GM18951 (cell line): ENCODE measurements at regions of chr1 and their contacts with region 1.

Region 1: DNA sequence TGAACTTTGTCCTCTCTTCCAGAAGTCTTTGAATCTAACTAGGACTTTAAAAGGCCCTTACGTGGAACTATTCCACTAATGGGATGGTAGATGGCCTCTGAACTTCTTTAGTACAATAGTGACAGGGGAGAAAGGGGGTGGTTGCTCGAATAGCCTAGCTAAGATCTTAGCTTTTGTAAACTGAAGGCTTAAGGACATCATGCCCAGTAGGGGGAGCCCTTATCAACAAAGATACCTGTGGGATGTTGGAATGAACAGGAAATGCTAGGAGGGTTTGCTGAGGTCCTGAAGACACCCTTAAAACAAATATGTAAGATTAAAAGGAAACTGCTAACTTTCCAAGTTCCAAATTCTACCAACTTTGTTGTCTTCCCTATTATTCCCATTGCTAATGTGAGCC is 33.2 kb downstream of the NHLH2 start:
- POLR2A ChIP-seq: no peak

Region 2: GRCh38 chr1:115911324-115911723 is 103.6 kb after region 1 on chr1:
- in situ Hi-C with region 1: no loop called
- POLR2A ChIP-seq: no peak

Region 3: DNA sequence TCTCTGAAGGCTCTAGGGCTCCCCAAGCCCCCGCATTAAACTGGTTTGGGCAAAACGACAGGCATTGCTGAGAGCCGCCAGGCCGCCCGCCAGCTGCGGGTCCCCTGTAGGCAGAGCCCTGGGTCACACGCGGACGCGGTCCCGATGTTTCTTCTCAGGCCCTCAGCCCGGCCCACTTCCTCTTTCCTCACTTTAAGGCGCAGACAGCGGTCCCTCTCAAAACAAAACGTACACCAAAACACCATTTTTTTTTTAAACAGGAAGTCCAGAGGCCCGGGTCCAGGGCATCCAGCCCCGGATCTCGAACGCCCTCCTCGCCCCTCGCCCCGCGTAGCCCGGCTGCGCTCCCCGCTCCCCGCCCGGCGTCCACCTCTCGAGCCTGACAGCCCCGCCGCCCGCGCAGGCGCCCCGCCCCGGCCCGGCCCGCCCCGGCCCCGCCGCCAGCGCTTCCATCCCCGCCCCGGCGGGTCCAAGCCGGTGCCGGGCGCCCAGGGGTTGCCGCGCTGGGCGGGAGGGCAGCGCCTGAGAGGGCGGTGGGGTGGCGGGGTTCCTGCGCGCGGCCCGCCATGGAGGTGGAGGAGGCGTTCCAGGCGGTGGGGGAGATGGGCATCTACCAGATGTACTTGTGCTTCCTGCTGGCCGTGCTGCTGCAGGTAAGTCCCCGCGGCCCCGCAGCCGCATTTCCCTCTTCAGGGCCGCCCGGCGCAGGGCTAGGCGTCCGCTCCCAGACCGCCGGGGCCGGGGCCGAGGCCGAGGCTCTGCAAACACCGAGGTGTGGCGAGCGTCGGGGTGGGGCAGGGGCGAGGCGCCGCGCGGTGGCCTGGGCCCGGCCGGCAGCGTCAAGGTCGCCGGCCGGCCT is 168.6 kb after region 1 on chr1 and contains the start of gene SLC22A15:
- in situ Hi-C with region 1: loop called (anchors 25 kb)
- POLR2A ChIP-seq: peak; percentile 39